ENCODE measurements at regions of chr6 and their contacts with region 1.

Region 1: DNA sequence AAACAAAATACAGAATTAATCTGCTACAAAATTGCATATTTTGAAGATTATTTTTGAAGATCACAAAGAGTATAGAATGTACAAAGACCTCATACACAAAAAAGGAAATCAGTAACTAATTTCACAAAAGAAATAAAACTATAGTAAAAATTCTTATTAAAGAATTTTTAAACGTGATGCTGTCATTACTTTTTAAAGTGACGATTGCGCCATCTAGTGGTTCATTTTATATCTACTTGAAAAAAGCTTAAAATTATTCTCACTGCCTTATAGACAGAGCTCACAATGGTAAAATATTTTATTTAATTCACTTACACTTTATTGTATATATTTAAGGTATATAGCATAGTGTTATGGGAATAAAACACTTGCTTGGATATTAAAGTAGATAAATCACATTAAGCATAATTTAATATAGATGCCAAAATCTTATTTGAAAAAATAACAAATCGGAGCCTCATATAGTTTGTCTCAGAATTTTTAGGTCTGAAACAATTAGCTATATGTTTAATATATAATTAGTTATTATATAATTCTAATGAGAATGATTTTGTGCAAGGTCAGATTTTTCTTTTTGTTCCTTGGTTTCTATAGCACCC is 128.8 kb downstream of the PHF3 start:
- DNase-seq: no peak
- H3K4me3 ChIP-seq: no peak overlapping the region
- H3K27ac ChIP-seq: no peak overlapping the region
- H3K4me1 ChIP-seq: no peaks in the 10 kb centered on the region
- H3K27me3 ChIP-seq: no peaks in the 10 kb centered on the region
- CTCF ChIP-seq: peak; percentile 59

Region 2: GRCh38 chr6:63598049-63599036 is 166.1 kb before region 1 on chr6:
- intact Hi-C with region 1: loop called (anchors 2 kb)
- DNase-seq: peak; percentile 87
- H3K4me3 ChIP-seq: peak overlapping the region; percentile 37
- H3K27ac ChIP-seq: peak overlapping the region; percentile 35
- H3K4me1 ChIP-seq: no peaks in the 10 kb centered on the region
- H3K27me3 ChIP-seq: no peaks in the 10 kb centered on the region
- CTCF ChIP-seq: peak; percentile 84

Measured in colonic mucosa (tissue), 4 donors.